Esophagus squamous epithelium (tissue), 5 donors: ENCODE measurements at regions of chr2 and their contacts with region 1.

Region 1: DNA sequence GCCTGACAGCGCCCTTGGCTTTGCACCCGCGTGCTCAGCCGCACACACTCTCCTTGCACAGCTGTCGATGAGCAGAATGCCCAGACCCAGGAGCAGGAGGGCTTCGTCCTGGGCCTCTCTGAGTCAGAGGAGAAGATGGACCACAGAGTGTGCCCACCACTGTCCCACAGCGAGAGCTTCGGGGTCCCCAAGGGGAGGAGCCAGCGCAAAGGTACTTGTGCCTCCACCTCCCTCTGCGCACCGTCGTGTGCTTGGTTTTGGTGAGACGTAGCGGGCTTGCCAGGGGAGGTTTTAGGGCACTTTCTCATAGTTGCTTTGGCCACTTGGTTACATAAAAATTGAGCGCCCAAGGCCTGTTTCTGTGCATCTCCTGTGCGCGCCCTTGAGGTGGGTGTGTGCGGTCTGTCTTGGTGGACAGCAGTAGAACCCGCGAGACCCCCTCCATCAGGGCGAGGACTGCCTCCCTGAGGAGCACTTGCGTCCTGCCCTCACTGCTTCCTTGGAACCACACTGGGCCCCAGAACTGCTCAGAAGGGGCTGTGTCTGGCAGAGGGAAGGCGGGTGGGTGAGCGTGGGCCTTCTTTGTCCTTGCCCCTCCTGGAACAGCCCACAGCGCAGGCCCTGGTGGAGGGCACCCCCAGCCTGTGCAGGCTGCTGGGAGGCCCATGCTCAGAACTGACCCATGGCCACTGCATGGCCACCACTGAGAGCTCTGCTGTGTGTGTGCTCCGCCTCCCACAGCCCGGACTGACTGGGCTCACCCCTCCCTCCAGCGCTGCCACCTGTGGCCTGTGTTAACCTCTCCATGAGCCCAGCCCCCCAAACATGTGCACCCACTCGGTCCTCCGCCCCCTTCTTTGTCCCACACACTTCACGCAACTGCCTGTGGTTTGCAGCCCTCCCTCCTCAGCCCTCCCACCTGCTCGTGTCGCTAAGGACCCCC is 95.9 kb downstream of the DGKD start:
- DNase-seq: no peak
- H3K4me3 ChIP-seq: no peak overlapping the region
- H3K27ac ChIP-seq: no peak overlapping the region
- H3K4me1 ChIP-seq: peaks cover 0 to 11% (median 0%) of the 10 kb centered on the region in 3 donors
- H3K27me3 ChIP-seq: no peaks in the 10 kb centered on the region
- CTCF ChIP-seq: no peak
- POLR2A ChIP-seq: no peak

Region 2: DNA sequence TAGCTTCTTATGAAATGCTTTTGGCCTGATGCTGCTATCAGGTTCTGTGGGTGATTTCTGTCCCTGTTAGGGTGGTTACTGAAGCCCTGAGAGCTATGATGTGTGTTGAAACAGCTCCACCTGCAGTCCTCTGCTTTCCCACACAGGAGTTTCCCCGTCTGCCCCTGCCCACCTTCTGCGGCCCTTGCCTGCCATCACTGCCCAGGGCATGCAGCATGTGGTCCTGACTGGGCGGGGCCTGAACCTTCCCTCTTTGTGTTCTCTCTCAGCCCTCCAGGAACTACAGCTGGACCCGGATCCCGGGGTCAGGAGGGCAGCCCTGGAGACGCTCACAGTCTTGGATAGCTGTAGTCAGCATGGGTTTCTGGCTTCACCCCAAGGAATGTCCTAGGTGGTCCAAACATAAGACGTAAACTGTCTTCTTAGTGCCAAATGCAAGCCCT is 382.7 kb after region 1 on chr2:
- intact Hi-C with region 1: loop called (anchors 5 kb)
- DNase-seq: no peak
- H3K4me3 ChIP-seq: no peak overlapping the region
- H3K27ac ChIP-seq: no peak overlapping the region
- H3K4me1 ChIP-seq: peaks cover 0 to 24% (median 5%) of the 10 kb centered on the region in 3 donors
- H3K27me3 ChIP-seq: no peaks in the 10 kb centered on the region
- CTCF ChIP-seq: peak in 5 of 6 experiments; percentile 29 to 50 (median 38)
- POLR2A ChIP-seq: no peak